AG04449 (cell line): ENCODE measurements at regions of chr11 and their contacts with region 1.

Region 1: DNA sequence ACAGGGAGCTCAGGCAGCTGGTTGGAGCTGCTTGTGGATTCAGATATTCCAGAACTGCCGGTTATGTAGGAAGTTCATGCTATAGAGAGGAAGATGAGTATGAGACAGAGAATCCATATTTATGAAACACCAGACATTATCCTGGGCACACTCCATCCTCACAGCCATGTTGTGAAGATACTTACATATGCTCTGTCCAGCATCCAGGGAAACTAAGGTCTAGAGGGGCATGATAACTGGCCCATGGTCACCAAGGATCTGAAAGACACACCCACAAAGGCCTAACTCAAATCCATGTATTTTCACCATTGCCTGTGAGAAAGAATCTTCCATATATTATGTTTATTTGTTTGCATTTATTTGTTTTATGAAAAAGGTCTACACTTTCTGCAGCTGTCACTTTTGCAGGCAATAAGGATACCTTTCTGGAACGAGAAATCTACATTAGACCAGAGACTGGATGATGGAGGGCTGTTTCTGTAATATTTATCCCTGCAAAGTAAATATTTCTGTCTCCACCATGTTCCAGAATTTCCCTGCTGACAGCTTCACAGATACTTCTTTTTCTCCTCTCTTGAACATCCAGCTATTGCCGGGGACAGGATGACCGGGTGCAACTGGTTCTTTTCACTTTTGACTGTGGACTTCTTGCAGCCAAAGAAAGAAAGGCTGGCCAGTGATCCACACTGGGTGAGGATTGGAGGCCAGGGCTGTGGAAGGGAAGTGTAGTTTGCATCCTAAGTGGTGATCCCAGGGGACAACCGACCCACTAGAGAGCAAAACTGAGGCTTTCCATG is 145.9 kb upstream of the NAV2 start:
- DNase-seq: no peak
- H3K4me3 ChIP-seq: no peak overlapping the region
- CTCF ChIP-seq: no peak

Region 2: DNA sequence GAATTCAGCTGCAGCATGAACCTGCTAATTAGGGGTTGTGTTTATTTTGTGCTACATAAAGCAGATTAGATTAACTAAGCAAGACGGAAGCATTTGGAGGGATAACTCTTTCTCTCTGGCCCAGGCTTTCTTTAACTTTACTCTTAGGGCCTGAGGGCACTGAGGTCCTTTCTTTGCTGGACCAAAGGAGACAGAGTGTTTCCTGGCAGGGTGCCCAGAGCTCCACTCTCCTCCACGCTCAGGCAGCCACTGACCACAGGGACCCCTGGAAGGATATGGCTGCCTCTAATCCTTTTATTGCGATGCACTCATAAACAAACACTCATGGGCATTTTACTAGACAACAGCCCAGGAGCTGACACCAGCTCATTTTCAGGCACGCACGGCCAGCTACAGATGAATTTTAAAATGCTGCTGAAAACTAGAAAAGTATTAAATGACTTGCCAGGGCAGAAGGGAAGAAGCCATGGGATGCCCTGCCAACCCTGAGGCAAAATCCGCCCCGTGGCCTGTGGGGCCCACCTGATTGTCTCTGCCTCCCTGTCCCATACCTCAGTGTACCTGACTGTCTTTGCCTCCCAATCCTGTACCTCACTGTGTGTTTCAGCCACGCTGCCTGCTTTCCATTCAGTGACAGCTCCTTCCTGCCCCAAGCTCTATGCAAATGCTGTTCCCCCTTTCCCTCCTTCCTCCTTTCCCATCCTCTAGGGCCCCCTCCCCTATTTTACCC is 46.7 kb before region 1 on chr11:
- CTCF ChIA-PET with region 1: no interaction called
- POLR2A ChIA-PET with region 1: no interaction called
- DNase-seq: no peak
- H3K4me3 ChIP-seq: no peak overlapping the region
- CTCF ChIP-seq: no peak

Region 3: GRCh38 chr11:19577976-19578619 is 11.3 kb after region 1 on chr11:
- CTCF ChIA-PET with region 1: interaction called, 70 read pairs
- POLR2A ChIA-PET with region 1: interaction called, 3 read pairs
- DNase-seq: no peak
- H3K4me3 ChIP-seq: peak overlapping the region; percentile 4; the same call in 1 of the 2 replicates
- CTCF ChIP-seq: no peak

Region 4: GRCh38 chr11:19595840-19596751 is 29.3 kb after region 1 on chr11:
- CTCF ChIA-PET with region 1: interaction called, 16 read pairs
- POLR2A ChIA-PET with region 1: no interaction called
- DNase-seq: peak; percentile 80
- H3K4me3 ChIP-seq: peak overlapping the region; percentile 1; the same call in 1 of the 2 replicates
- CTCF ChIP-seq: no peak

Region 5: GRCh38 chr11:19751055-19751454 is 184.3 kb after region 1 on chr11:
- CTCF ChIA-PET with region 1: interaction called, 452 read pairs
- POLR2A ChIA-PET with region 1: no interaction called
- DNase-seq: no peak
- H3K4me3 ChIP-seq: no peak overlapping the region
- CTCF ChIP-seq: no peak

Region 6: DNA sequence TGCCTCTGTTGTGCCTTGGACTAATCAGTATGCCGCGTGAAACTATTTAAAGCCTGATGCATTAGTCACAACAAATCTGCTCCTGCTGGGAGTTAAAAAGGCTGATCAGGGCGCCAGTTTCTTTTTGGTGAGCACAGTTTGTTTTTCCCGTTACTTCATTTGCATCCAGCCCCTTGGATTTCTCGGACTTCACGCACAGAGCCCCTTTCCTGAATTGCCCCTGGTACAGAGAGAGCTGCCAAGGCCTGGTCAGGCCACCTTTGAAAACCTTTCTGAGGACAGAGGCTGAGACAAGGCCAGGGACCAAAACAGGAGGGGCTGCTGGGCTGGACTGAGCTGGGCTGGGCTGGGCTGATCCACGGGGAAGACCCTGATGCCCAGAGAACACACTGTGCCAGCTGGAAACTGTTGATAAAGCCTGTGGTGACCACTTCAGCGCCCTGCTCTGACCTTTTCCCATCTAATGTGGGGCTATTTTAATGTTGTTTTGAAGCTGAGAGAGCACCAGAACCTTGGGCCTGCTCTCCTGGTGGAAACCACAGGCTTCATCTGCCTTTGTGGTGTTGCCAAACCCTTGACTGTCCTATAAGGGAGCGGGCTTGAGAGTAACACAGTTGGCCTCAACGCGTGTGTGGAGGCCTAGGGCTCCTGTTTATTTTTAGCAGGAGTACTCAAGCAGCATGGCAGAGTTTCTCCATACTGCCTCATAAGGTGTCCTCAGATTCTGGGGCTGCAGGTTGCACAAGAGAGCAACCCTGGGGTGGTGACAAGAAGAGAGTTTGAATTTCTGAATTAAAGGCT is 190.1 kb after region 1 on chr11:
- CTCF ChIA-PET with region 1: interaction called, 46 read pairs
- POLR2A ChIA-PET with region 1: no interaction called
- DNase-seq: no peak
- H3K4me3 ChIP-seq: no peak overlapping the region
- CTCF ChIP-seq: no peak